Posterior cingulate gyrus (tissue), 11 donors: ENCODE measurements at regions of chr10 and their contacts with region 1.

Region 1: GRCh38 chr10:112949875-112950507 is at the start of gene TCF7L2:
- DNase-seq: peak; percentile 80 to 97 (median 88)

Region 2: DNA sequence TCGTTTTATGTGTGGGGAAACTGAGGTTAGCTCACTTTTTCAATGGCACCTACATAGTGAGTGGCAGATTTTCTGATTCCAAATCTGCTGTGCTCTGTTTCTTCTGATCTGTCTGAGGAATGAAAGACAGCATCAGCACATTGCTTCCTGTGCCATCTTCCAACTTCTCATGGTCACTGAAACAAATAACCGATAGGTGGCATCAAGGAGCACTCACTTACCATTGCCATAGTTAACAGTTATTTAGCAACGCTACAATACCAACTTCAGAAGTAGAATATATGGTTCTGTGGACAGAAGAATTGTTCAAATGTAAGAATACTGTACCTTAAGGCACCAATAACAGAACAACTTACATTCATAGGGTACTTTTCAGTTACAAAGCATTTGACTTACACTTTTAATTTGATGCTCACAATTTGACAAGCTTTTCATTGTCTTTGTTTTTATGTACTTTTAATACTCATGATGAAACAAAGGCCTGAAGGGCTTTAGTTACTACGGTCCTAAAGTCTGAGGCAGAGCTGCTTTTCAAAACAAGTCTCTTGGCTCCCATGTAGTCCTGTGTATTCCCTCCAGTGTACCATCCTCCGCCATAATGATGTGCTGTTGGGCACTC is 228.8 kb before region 1 on chr10:
- intact Hi-C with region 1: loop called (anchors 10 kb)
- DNase-seq: no peak

Region 3: GRCh38 chr10:113058523-113058961 is 108.6 kb after region 1 on chr10:
- intact Hi-C with region 1: loop called (anchors 2 kb)
- DNase-seq: no peak

Region 4: DNA sequence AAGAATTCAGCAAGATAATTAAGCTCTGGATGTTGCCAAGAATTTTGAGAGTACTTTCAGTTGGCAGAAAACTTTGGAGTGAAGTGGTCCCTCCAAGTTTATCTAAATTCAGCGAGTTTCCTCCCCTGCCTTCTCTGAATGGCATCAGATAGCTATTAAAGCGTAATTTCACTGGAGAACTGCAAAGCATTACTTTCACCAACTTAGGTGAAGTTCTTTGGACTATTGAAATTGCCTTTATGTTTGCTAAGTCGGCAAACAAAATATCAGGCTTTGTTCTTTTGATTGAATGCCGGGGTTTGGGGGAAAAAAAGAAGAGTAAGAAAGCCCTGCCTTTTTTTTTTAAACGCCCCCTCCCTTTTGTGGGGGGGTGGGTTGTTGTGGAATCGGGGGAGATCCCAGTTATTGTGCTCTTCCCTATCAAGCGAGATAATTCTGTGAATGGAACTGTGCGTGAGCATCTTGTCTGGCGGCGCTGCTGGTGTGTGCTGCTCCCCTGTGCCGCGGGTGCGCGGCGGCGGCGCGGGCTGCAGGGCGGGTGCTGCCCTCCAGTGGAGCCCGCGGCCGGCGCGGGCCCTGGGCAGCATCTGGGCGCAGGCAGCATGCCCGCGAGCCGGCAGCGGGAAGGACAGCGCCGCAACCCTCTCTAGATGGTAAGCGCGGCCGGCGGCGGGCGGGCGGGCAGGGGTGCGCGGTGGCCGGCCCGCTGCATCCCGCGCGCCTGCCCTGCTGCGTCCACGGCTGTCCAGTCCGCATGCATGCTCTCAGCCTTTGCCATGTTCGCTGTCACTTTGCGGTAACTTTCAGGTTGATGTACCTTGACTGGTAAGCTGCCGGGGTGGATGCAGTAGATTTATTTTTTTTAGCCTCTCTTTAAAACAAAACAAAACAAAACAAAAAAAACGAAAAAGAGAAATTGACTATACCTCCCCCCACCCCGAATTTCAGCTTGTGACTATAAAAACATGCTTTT is 176.5 kb after region 1 on chr10:
- intact Hi-C with region 1: loop called (anchors 5 kb)
- DNase-seq: peak; percentile 41 to 96 (median 74)

Region 5: DNA sequence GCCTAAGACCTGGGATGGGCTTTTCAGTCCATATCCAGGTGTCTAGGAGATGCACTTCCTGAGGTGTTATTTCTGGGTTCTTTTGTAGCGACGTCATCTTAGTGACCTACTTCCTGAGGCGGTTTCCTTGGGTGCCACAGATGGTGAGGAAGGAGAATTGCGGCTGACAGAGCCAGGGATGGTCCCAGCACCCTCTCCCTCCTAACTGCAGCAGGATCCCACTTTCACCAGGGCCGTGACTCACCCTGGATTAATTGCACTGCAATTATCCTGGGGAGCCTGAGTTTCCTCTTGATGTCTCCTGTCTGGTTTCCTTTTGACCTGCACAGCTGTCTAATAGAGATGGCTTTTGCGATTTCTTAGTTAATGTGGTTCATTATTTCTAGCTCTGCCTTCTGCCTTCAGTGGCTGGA is 271.8 kb after region 1 on chr10:
- intact Hi-C with region 1: no loop called
- DNase-seq: no peak